ENCODE measurements at regions of chr14 and their contacts with region 1.

Region 1: GRCh38 chr14:94173885-94174603 is at the start of gene PPP4R4:
- DNase-seq: peak; percentile 78
- ATAC-seq: peak; percentile 93
- H3K4me3 Mint-ChIP-seq: peak within 1 kb of the TSS; percentile 81
- H3K27ac Mint-ChIP-seq: no peak within 1 kb of the TSS
- H3K4me1 Mint-ChIP-seq: peaks cover 15% of the 10 kb centered on the region
- H3K27me3 Mint-ChIP-seq: peaks cover 43% of the 10 kb centered on the region
- CTCF ChIP-seq: no peak
- total RNA-seq, gene PPP4R4: 0.22 TPM in 1 of 2 replicates, not detected in the other

Region 2: DNA sequence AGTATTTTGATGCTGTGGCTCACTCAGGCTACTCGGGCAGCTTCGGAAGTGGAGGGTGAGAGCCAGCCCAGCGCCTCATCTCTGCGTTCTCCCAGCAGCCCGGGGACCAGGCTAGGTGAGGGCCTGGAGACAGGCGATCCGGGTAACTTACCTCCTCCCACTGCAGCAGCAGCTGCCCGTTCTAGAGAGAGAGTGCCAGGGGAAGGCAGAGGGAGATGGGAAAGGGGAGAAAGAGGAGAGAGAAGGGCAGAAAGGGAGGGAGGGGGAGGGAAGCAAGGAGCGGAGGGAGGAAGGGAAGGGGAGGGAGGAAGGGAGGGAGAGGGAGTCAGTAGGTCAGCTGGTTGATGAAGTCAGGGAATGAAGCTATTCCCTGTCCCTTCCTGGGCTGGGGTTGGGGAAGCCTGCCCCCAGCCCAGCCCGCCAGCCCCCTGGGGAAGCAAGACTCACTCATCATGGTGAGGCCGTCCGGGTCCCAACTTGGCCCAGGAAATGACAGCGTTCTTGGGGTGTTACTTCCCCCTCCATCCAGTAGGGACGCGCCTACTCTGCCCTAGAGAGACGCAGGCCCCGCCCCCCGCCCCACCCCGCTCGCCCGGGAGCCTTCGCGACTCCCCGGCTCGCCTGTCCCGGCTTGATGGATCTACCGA is 44.8 kb before region 1 on chr14 and contains the start of gene IFI27L2:
- CTCF ChIA-PET with region 1: interaction called, 3 read pairs
- POLR2A ChIA-PET with region 1: no interaction called
- intact Hi-C with region 1: loop called (anchors 1 kb)
- DNase-seq: peak; percentile 41
- ATAC-seq: peak; percentile 98
- H3K4me3 Mint-ChIP-seq: peak within 1 kb of the TSS; percentile 88
- H3K27ac Mint-ChIP-seq: peak within 1 kb of the TSS; percentile 54
- H3K4me1 Mint-ChIP-seq: peaks cover 19% of the 10 kb centered on the region
- H3K27me3 Mint-ChIP-seq: peaks cover 6% of the 10 kb centered on the region
- CTCF ChIP-seq: no peak
- total RNA-seq, gene IFI27L2: 37.0 and 37.3 TPM in 2 replicates

Measured in activated B cell treated with CpG ODN at 0.5 μM for 24 hours (primary cell).